HepG2 (cell line): ENCODE measurements at regions of chr2 and their contacts with region 1.

Region 1: GRCh38 chr2:214809751-214810564 is 475 bp upstream of the BARD1 start:
- DNase-seq: peak; percentile 96
- ATAC-seq: peak; percentile 94
- H3K4me3 ChIP-seq: peak overlapping the region; percentile 90 to 95 (median 93)
- H3K27ac ChIP-seq: peak overlapping the region; percentile 85
- H3K4me1 ChIP-seq: peaks cover 47% of the 10 kb centered on the region
- H3K27me3 ChIP-seq: no peaks in the 10 kb centered on the region
- CTCF ChIP-seq: peak; percentile 5; the same call in 1 of the 2 replicates
- EP300 ChIP-seq: peak in 1 of 2 experiments; percentile 11; a peak in 1 of 4 replicates
- POLR2A ChIP-seq: peak; percentile 89 to 93
- RAD21 ChIP-seq: peak; percentile 48

Region 2: DNA sequence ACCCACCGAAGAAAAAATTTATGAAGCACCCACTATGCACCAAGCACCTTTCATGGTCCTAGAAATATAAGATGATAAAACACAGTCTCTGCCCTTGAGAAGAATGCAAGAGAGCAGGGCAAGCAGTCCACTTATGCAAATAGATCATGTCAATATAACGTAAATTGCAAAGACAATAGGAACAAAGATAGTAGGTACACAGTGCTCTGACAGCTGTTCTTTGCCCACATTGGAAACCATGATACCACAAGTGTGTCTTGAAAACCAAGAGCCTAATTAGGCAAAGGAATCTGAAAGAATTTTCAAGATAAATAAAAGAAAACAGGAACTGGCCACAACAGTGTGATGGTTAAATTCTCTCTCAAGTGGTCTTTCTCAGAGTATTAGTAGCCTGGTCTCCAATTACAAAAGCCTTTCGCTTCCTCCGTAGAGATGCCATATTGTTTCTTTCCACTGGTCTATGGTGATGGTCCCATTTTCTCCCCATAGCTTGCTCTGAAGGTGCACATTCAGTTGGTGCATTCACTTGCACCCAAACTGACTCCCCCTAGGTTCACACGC is 290.6 kb before region 1 on chr2:
- CTCF ChIA-PET with region 1: no interaction called
- POLR2A ChIA-PET with region 1: no interaction called
- in situ Hi-C with region 1: no loop called
- intact Hi-C with region 1: no loop called
- DNase-seq: no peak
- ATAC-seq: no peak
- H3K4me3 ChIP-seq: no peak overlapping the region
- H3K27ac ChIP-seq: no peak overlapping the region
- H3K4me1 ChIP-seq: no peaks in the 10 kb centered on the region
- H3K27me3 ChIP-seq: no peaks in the 10 kb centered on the region; a peak in 1 of 5 replicates
- CTCF ChIP-seq: no peak
- EP300 ChIP-seq: no peak
- POLR2A ChIP-seq: no peak
- RAD21 ChIP-seq: no peak

Region 3: GRCh38 chr2:214853906-214854305 is 43.9 kb after region 1 on chr2:
- CTCF ChIA-PET with region 1: no interaction called
- POLR2A ChIA-PET with region 1: interaction called, 4 read pairs
- in situ Hi-C with region 1: no loop called
- intact Hi-C with region 1: loop called (anchors 1 kb)
- DNase-seq: peak; percentile 94
- ATAC-seq: peak; percentile 99
- H3K4me3 ChIP-seq: no peak overlapping the region; a peak in 1 of 6 replicates
- H3K27ac ChIP-seq: peak overlapping the region; percentile 76
- H3K4me1 ChIP-seq: peaks cover 34% of the 10 kb centered on the region
- H3K27me3 ChIP-seq: no peaks in the 10 kb centered on the region
- CTCF ChIP-seq: no peak
- EP300 ChIP-seq: peak; percentile 78 to 81; a peak in 3 of 4 replicates
- POLR2A ChIP-seq: no peak
- RAD21 ChIP-seq: no peak

Region 4: DNA sequence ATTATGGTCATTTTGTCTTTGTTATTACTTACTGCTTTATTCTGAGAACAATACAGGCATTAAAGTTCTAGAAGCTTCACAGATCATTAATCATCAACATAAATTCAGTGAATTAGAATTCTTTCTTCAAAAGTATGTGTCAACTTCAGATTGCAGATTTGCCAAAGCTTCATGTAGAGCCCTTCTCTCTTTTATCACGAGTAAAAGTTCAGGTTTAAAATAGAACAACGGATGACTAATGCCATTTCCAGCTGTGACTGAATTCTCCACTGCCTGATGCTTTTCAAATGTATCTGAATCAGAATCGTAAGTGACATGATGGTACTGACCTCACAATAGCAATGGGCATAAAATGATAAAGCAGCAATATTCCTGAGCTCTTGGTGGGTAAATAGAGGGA is 212.5 kb after region 1 on chr2:
- CTCF ChIA-PET with region 1: no interaction called
- POLR2A ChIA-PET with region 1: no interaction called
- in situ Hi-C with region 1: no loop called
- intact Hi-C with region 1: no loop called
- DNase-seq: no peak
- ATAC-seq: no peak
- H3K4me3 ChIP-seq: no peak overlapping the region
- H3K27ac ChIP-seq: no peak overlapping the region
- H3K4me1 ChIP-seq: no peaks in the 10 kb centered on the region
- H3K27me3 ChIP-seq: peaks cover 0 to 5% of the 10 kb centered on the region in 2 experiments; a peak in 2 of 5 replicates
- CTCF ChIP-seq: no peak
- EP300 ChIP-seq: no peak
- POLR2A ChIP-seq: no peak
- RAD21 ChIP-seq: no peak